ENCODE measurements at regions of chr3 and their contacts with region 1.

Region 1: GRCh38 chr3:14921078-14921616 is 26.2 kb upstream of the NR2C2 start:
- DNase-seq: peak; percentile 68 to 83
- H3K4me3 ChIP-seq: no peak overlapping the region
- H3K27ac ChIP-seq: no peak overlapping the region
- H3K4me1 ChIP-seq: no peaks in the 10 kb centered on the region
- H3K27me3 ChIP-seq: no peaks in the 10 kb centered on the region
- CTCF ChIP-seq: peak; percentile 98

Region 2: GRCh38 chr3:14508961-14509795 is 412.0 kb before region 1 on chr3:
- CTCF ChIA-PET with region 1: no interaction called
- POLR2A ChIA-PET with region 1: no interaction called
- intact Hi-C with region 1: loop called (anchors 1 kb)
- DNase-seq: peak; percentile 44 to 68
- H3K4me3 ChIP-seq: no peak overlapping the region
- H3K27ac ChIP-seq: no peak overlapping the region
- H3K4me1 ChIP-seq: 0 out of 2 replicates have a peak, but pooled peaks cover 5% of the 10 kb centered on the region
- H3K27me3 ChIP-seq: 0 out of 2 replicates have a peak, but pooled peaks cover 5% of the 10 kb centered on the region
- CTCF ChIP-seq: peak; percentile 96

Region 3: GRCh38 chr3:14633819-14634424 is 287.2 kb before region 1 on chr3:
- CTCF ChIA-PET with region 1: no interaction called
- POLR2A ChIA-PET with region 1: no interaction called
- intact Hi-C with region 1: loop called (anchors 1 kb)
- DNase-seq: peak; percentile 32 to 39
- H3K4me3 ChIP-seq: no peak overlapping the region
- H3K27ac ChIP-seq: no peak overlapping the region
- H3K4me1 ChIP-seq: 0 out of 2 replicates have a peak, but pooled peaks cover 5% of the 10 kb centered on the region
- H3K27me3 ChIP-seq: peaks cover 17% of the 10 kb centered on the region; the same call in 1 of the 2 replicates
- CTCF ChIP-seq: peak; percentile 81

Region 4: GRCh38 chr3:14672588-14672987 is 248.6 kb before region 1 on chr3:
- CTCF ChIA-PET with region 1: interaction called, 9 read pairs
- POLR2A ChIA-PET with region 1: no interaction called
- intact Hi-C with region 1: loop called (anchors 2 kb)
- DNase-seq: no peak
- H3K4me3 ChIP-seq: no peak overlapping the region
- H3K27ac ChIP-seq: no peak overlapping the region
- H3K4me1 ChIP-seq: no peaks in the 10 kb centered on the region
- H3K27me3 ChIP-seq: no peaks in the 10 kb centered on the region
- CTCF ChIP-seq: no peak

Region 5: GRCh38 chr3:14791343-14791945 is 129.7 kb before region 1 on chr3:
- CTCF ChIA-PET with region 1: interaction called, 3 read pairs
- POLR2A ChIA-PET with region 1: no interaction called
- intact Hi-C with region 1: loop called (anchors 1 kb)
- DNase-seq: peak in 1 of 2 experiments; percentile 48
- H3K4me3 ChIP-seq: no peak overlapping the region
- H3K27ac ChIP-seq: no peak overlapping the region
- H3K4me1 ChIP-seq: no peaks in the 10 kb centered on the region
- H3K27me3 ChIP-seq: no peaks in the 10 kb centered on the region
- CTCF ChIP-seq: peak; percentile 81

Region 6: GRCh38 chr3:14857506-14857905 is 63.6 kb before region 1 on chr3:
- CTCF ChIA-PET with region 1: no interaction called
- POLR2A ChIA-PET with region 1: no interaction called
- intact Hi-C with region 1: loop called (anchors 5 kb)
- DNase-seq: no peak
- H3K4me3 ChIP-seq: no peak overlapping the region
- H3K27ac ChIP-seq: no peak overlapping the region
- H3K4me1 ChIP-seq: no peaks in the 10 kb centered on the region
- H3K27me3 ChIP-seq: no peaks in the 10 kb centered on the region
- CTCF ChIP-seq: peak; percentile 44; the same call in 1 of the 2 replicates

Region 7: GRCh38 chr3:15171096-15171495 is 249.9 kb after region 1 on chr3:
- CTCF ChIA-PET with region 1: no interaction called
- POLR2A ChIA-PET with region 1: no interaction called
- intact Hi-C with region 1: no loop called
- DNase-seq: no peak
- H3K4me3 ChIP-seq: no peak overlapping the region
- H3K27ac ChIP-seq: no peak overlapping the region
- H3K4me1 ChIP-seq: no peaks in the 10 kb centered on the region
- H3K27me3 ChIP-seq: peaks cover 39% of the 10 kb centered on the region
- CTCF ChIP-seq: no peak

Region 8: DNA sequence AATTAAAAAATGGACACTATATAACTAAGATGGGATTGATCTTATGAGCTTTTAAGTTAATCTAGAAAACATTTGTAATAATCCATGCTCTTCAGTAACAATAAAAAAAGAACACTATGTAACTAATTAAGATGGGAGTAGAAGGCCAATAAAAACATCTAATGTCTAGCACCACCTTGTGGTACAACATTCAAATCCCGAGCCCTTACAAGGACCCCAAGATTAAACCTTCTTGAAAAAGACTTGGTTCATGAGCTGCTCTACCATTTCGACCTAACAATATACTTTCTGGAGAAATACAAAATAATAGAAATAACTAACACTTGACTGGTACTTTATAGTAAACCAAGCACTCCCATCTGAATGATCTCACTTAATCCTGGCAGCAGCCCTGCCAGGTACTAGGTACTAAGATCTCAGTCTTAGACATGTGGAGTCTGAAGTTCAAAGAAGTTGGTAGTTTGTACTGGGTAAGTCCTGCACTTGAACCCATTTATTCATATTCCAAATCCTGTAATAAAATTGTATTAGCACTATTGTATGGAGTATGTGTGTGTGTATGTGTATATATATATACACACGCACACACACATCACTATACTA is 484.4 kb after region 1 on chr3:
- CTCF ChIA-PET with region 1: no interaction called
- POLR2A ChIA-PET with region 1: no interaction called
- intact Hi-C with region 1: loop called (anchors 10 kb)
- DNase-seq: no peak
- H3K4me3 ChIP-seq: no peak overlapping the region
- H3K27ac ChIP-seq: no peak overlapping the region
- H3K4me1 ChIP-seq: peaks cover 8% of the 10 kb centered on the region; the same call in 1 of the 2 replicates
- H3K27me3 ChIP-seq: no peaks in the 10 kb centered on the region
- CTCF ChIP-seq: peak; percentile 84